ENCODE measurements at regions of chr12 and their contacts with region 1.

Region 1: DNA sequence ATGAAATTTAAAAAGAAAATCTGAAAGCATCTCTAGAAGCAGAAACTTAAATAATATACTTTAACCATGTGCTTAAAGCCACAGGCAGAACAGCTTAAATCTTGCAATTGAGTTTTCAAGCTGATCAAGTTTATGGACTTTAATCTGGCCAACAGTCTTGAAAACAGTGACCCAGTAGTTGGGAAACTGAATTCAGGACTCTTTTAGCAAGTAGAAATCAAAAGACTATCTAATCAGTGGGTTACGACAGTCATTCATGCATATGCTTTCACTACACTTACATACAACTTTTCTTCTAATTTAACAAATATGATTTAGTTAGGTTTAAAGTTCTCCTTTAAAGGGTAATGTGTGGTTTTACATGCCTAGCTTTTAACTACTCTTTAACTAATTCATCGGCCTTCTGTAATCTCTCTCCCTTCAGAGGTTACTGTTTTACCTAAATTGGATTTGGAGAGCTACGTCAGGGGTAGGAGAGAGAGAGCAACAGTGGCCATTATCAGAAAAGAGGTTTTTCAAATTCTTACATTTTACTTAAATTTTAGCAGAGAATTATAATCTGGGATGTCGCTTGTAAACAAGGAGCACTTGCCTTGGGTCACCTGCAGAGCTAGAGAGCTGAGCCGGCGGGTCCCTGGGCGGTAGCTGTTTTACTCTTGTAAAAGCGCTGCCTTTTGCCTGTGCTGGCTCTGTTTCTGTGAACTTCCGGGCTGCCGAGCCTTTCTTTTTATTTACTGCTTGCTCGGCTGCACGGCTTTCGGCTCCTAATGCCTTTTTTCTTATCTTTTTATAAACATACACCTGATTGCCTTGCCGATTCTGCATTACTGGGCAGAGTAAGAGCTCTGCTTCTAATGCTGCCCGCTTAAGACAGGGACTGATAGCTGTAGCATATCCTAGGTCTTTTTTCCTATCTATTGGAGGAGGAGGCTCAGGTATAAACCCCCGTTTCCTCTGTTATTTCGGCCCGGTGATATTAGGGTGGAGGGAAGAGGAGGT is 17.4 kb upstream of the LYZ start:
- DNase-seq: peak; percentile 73
- ATAC-seq: peak; percentile 85
- H3K4me3 Mint-ChIP-seq: peak overlapping the region; percentile 79
- H3K27ac Mint-ChIP-seq: peak overlapping the region; percentile 92
- H3K4me1 Mint-ChIP-seq: peaks cover 43% of the 10 kb centered on the region
- H3K27me3 Mint-ChIP-seq: no peaks in the 10 kb centered on the region

Region 2: DNA sequence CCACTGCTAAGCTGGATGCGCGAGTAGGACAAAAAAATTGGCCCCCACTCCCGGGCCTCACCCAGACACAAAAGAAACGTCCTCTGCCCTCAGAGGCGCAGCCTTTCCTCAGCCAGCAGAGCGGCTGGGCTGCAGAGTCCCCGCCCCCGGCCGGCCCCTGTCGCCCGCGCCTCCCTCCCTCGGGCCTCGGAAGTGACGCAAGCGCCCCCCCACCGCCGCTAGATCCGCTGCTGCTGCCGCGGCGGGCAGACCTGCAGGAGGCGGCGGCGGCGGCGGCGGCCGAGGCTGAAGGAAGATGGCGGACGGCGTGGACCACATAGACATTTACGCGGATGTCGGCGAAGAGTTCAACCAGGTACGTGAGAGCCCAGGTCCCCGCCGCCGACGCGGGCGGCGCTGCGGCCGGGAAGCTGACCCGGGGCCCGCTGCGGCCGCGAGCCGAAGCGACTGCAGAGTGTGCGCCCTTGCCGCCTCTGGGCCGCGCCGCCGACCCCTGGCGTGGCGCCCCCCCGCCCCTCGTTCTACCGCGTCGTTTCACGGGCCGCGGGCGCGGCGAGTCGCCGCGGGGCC is 91.3 kb before region 1 on chr12 and contains the start of gene CPSF6:
- CTCF ChIA-PET with region 1: interaction called, 3 read pairs
- POLR2A ChIA-PET with region 1: interaction called, 11 read pairs
- DNase-seq: peak; percentile 97
- ATAC-seq: peak; percentile 92
- H3K4me3 Mint-ChIP-seq: peak within 1 kb of the TSS; percentile 93
- H3K27ac Mint-ChIP-seq: peak within 1 kb of the TSS; percentile 97
- H3K4me1 Mint-ChIP-seq: peaks cover 45% of the 10 kb centered on the region
- H3K27me3 Mint-ChIP-seq: no peaks in the 10 kb centered on the region
- total RNA-seq, gene CPSF6: 95.6 to 97.8 TPM

Region 3: DNA sequence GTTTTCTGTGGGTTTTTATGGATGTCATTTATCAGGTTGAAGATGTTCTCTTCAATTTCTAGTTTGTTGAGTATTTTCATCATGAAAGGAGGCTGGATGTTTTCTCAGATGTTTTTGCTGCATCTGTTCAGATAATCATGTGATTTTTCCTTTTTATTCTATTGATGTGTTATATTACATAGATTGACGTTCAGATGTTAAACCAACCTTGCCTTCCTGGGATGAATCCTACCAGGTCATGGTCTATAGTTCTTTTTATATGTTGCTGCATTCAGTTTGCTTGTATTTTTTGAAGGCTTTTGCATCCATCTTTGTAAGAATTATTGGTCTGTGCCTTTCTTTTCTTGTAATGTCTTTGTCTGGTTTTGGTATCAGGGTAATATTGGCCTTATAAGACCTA is 26.5 kb before region 1 on chr12:
- CTCF ChIA-PET with region 1: no interaction called
- POLR2A ChIA-PET with region 1: no interaction called
- DNase-seq: no peak
- ATAC-seq: no peak
- H3K4me3 Mint-ChIP-seq: no peak overlapping the region
- H3K27ac Mint-ChIP-seq: no peak overlapping the region
- H3K4me1 Mint-ChIP-seq: no peaks in the 10 kb centered on the region
- H3K27me3 Mint-ChIP-seq: peaks cover 8% of the 10 kb centered on the region

Region 4: DNA sequence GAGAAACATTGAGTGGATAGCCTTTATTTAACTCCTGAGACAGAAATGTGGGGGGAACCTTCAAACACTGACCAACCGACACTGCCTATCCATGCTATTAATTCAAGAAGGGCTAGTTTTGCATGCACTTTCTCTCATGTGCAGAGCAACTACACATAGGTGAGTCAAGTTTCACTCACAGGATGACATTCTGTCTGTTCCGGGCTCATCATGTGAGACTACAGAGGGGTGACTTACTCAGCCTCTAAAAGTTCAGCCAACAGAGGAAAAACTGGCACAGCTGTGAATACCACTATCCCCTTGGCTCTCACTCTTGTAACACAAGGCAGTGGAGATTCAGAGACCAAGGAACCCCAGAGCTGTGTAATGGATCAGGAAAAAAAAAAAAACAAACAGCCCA is 355.0 kb after region 1 on chr12:
- CTCF ChIA-PET with region 1: no interaction called
- POLR2A ChIA-PET with region 1: no interaction called
- DNase-seq: no peak
- ATAC-seq: no peak
- H3K4me3 Mint-ChIP-seq: no peak overlapping the region
- H3K27ac Mint-ChIP-seq: no peak overlapping the region
- H3K4me1 Mint-ChIP-seq: peaks cover 5% of the 10 kb centered on the region
- H3K27me3 Mint-ChIP-seq: peaks cover 17% of the 10 kb centered on the region

Measured in activated CD8-positive, alpha-beta T cell treated with anti-CD3 and anti-CD28 coated beads, Interleukin-2, amount 10 ng/mL, durations not matched to agents 7 days and 5 days (primary cell).